ENCODE measurements at regions of chr18 and their contacts with region 1.

Region 1: DNA sequence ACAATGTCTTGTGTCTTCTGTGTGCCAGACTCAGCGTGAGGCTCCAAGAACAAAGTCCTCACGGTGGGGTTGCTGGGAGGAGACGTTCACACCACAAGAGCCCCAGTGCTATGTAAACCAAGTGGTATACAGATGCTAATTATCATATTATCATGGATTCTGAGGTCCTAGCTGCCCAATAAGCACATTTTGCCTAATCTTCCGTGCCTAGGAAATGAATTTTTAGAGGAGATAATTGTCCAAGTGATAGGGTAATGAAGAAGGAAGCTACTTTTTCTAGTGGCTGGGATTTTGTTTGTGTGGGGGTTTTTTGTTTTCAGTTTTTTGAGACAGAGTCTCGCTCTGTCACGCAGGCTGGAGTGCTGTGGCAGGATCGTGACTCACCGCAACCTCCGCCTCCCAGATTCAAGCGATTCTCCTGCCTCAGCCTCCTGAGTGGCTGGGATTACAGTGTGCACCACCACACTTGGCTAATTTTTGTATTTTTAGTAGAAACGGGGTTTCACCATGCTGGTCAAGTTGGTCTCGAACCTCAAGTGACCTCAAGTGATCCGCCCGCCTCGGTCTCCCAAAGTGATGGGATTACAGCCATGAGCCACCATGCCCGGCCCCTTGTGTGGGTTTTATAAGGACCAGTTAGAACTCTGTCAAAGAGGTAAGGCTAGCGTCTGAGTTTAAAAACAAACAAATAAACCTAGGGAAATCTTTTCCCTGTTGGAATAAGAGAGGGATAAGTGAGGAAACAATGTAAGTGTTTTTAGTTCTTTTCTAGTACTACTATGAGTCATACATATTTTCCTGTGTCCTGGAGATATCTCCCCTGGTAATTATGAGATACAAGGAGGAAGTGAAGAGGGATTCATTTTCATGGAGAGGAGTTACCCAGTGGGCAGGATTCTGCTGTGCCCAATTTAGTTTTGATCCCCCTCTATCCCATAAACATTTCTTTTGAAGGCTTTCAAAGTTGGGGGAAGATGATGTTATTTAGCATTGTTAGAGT is 9.5 kb upstream of the SMAD7 start:
- DNase-seq: peak; percentile 58
- H3K4me3 ChIP-seq: no peak overlapping the region
- H3K27ac ChIP-seq: no peak overlapping the region
- H3K4me1 ChIP-seq: peaks cover 26% of the 10 kb centered on the region
- H3K27me3 ChIP-seq: peaks cover 0 to 4% of the 10 kb centered on the region in 2 experiments
- CTCF ChIP-seq: no peak
- POLR2A ChIP-seq: no peak

Region 2: GRCh38 chr18:48902023-48902855 is 58.0 kb before region 1 on chr18:
- CTCF ChIA-PET with region 1: no interaction called
- POLR2A ChIA-PET with region 1: no interaction called
- dilution Hi-C with region 1: no loop called
- intact Hi-C with region 1: no loop called
- DNase-seq: peak; percentile 96
- H3K4me3 ChIP-seq: no peak overlapping the region
- H3K27ac ChIP-seq: peak overlapping the region; percentile 99
- H3K4me1 ChIP-seq: peaks cover 26% of the 10 kb centered on the region
- H3K27me3 ChIP-seq: no peaks in the 10 kb centered on the region
- CTCF ChIP-seq: peak; percentile 9 to 22
- POLR2A ChIP-seq: peak; percentile 53

Region 3: DNA sequence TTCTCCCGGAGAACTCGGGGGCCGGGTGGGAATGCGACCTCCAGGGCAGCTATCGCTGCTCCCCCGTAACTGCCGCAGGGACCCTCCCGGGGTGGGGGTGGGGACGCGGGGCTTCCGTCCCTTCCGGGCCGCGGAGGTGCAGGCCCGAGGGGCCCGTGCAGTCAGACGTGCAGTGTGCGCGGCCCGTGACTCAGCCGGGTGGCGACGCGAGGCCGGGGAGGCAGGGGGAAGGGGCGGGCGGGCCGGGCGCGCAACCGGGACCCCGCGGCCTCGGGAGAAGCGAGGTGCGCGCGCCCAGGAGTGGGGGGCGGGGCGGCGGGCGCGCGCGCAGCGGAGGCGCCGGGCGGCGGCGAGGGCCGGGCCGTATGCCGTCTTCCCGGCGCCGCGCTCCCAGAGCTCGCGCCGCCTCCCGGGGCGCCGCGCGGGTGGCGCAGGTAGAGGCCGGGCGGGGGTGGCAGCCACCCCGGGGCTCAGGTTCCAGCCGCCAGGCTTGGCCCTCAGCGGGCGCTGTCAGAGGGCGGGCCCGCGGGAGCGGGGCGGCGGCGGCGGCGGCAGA is 15.5 kb after region 1 on chr18:
- CTCF ChIA-PET with region 1: interaction called, 5 read pairs
- POLR2A ChIA-PET with region 1: no interaction called
- dilution Hi-C with region 1: no loop called
- intact Hi-C with region 1: loop called (anchors 2 kb)
- DNase-seq: peak; percentile 35
- H3K4me3 ChIP-seq: peak overlapping the region; percentile 45 to 74 (median 60)
- H3K27ac ChIP-seq: no peak overlapping the region
- H3K4me1 ChIP-seq: peaks cover 7% of the 10 kb centered on the region
- H3K27me3 ChIP-seq: no peaks in the 10 kb centered on the region
- CTCF ChIP-seq: no peak
- POLR2A ChIP-seq: no peak

Region 4: DNA sequence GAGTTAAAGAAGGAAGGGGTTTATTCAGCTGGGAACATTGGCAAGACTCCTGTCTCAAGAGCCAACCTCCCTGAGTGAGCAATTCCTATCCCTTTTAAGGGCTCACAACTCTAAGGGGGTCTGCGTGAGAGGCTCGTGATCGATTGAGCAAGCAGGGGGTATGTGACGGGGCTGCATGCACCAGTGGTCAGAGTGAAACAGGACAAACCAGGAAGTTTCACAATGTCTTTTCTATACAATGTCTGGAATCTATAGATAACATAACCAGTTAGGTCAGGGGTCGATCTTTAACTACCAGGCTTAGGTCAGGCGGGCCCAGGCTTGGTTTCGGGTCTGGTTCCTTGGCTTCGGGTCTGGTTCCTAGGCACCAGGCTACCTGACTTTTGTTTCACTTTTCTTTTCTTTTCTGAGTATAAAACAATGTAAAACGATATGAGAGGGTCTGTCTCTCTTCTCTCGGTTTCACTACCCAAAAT is 571.5 kb after region 1 on chr18:
- CTCF ChIA-PET with region 1: no interaction called
- POLR2A ChIA-PET with region 1: no interaction called
- dilution Hi-C with region 1: no loop called
- intact Hi-C with region 1: no loop called
- DNase-seq: no peak
- H3K4me3 ChIP-seq: no peak overlapping the region
- H3K27ac ChIP-seq: no peak overlapping the region
- H3K4me1 ChIP-seq: no peaks in the 10 kb centered on the region
- H3K27me3 ChIP-seq: peaks cover 0 to 3% of the 10 kb centered on the region in 2 experiments
- CTCF ChIP-seq: no peak
- POLR2A ChIP-seq: no peak

Region 5: GRCh38 chr18:49597157-49597931 is 637.1 kb after region 1 on chr18:
- CTCF ChIA-PET with region 1: no interaction called
- POLR2A ChIA-PET with region 1: no interaction called
- dilution Hi-C with region 1: no loop called
- intact Hi-C with region 1: no loop called
- DNase-seq: no peak
- H3K4me3 ChIP-seq: no peak overlapping the region
- H3K27ac ChIP-seq: no peak overlapping the region
- H3K4me1 ChIP-seq: no peaks in the 10 kb centered on the region
- H3K27me3 ChIP-seq: no peaks in the 10 kb centered on the region
- CTCF ChIP-seq: no peak
- POLR2A ChIP-seq: no peak

Region 6: GRCh38 chr18:50726960-50727589 is 1766.9 kb after region 1 on chr18:
- CTCF ChIA-PET with region 1: no interaction called
- POLR2A ChIA-PET with region 1: no interaction called
- dilution Hi-C with region 1: no loop called
- intact Hi-C with region 1: no loop called
- DNase-seq: no peak
- H3K4me3 ChIP-seq: no peak overlapping the region
- H3K27ac ChIP-seq: no peak overlapping the region
- H3K4me1 ChIP-seq: no peaks in the 10 kb centered on the region
- H3K27me3 ChIP-seq: no peaks in the 10 kb centered on the region
- CTCF ChIP-seq: no peak
- POLR2A ChIP-seq: no peak